AG04449 (cell line): ENCODE measurements at regions of chr11 and their contacts with region 1.

Region 1: GRCh38 chr11:14320020-14320419 is 39.0 kb downstream of the RRAS2 start:
- DNase-seq: no peak
- H3K4me3 ChIP-seq: no peak overlapping the region
- CTCF ChIP-seq: no peak

Region 2: GRCh38 chr11:14300661-14301304 is 19.2 kb before region 1 on chr11:
- CTCF ChIA-PET with region 1: interaction called, 12 read pairs
- POLR2A ChIA-PET with region 1: no interaction called
- DNase-seq: no peak
- H3K4me3 ChIP-seq: no peak overlapping the region
- CTCF ChIP-seq: peak; percentile 74

Region 3: GRCh38 chr11:14308114-14308896 is 11.7 kb before region 1 on chr11:
- CTCF ChIA-PET with region 1: interaction called, 39 read pairs
- POLR2A ChIA-PET with region 1: no interaction called
- DNase-seq: no peak
- H3K4me3 ChIP-seq: no peak overlapping the region
- CTCF ChIP-seq: peak; percentile 63

Region 4: GRCh38 chr11:14499554-14500180 is 179.6 kb after region 1 on chr11 and contains the start of gene COPB1:
- CTCF ChIA-PET with region 1: no interaction called
- POLR2A ChIA-PET with region 1: no interaction called
- DNase-seq: peak; percentile 74
- H3K4me3 ChIP-seq: peak within 1 kb of the TSS; percentile 94
- CTCF ChIP-seq: no peak